ENCODE measurements at regions of chr2 and their contacts with region 1.

Region 1: GRCh38 chr2:113248997-113249770 is 29.5 kb downstream of the PAX8 start:
- DNase-seq: peak; percentile 79 to 80
- ATAC-seq: peak; percentile 57 to 89 (median 80)
- H3K4me3 ChIP-seq: no peak overlapping the region
- H3K27ac ChIP-seq: no peak overlapping the region
- H3K4me1 ChIP-seq: peaks cover 0 to 29% (median 3%) of the 10 kb centered on the region in 9 donors
- H3K27me3 ChIP-seq: peaks cover 0 to 2% (median 0%) of the 10 kb centered on the region in 7 donors
- CTCF ChIP-seq: peak; percentile 87 to 94 (median 91)

Region 2: DNA sequence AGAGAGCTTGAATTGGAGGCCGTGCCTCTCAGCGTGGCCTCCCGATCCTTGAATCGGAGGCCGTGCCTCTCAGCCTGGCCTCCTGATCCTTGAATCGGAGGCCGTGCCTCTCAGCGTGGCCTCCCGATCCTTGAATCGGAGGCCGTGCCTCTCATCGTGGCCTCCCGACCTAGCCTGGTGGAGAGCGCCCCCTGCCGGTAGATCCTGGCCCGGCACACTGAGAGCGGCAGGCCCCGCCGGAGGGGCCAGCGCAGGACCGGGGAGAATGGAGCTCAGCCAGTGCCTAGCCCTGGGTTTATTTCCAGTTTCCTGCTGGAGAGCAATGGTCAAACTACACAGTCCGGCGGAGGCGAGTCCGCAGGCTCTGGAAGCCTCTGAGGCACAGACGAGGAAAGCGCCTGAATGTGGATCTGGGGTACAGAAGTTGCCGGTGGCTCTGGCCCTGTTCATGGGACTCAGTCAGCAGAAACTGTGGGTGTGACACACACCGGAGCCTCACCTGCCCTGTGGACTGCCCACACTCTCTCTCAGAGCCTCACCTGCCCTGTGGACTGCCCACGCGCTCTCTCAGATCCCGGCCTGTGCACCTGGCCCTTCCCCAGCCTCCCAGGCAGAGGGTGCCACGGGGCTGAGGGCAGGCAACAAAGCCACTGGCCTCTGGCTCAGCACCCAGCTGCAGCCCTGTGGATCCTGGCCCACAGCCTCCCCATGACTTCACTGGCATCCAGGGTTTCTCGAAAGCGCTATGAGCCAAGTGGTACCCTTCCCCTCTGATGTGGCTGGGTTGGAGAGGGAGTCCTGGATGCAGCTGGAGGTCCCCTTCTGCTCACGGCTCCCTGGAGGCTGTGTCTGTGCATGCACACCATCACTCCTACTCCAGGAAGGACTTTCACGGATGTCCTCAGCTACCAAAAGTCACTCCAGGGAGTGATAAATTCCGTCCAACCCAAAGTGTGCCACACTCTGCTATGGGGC is 198.0 kb before region 1 on chr2:
- intact Hi-C with region 1: no loop called
- DNase-seq: no peak
- ATAC-seq: peak in 1 of 8 donors; percentile 41
- H3K4me3 ChIP-seq: no peak overlapping the region
- H3K27ac ChIP-seq: no peak overlapping the region
- H3K4me1 ChIP-seq: no peaks in the 10 kb centered on the region
- H3K27me3 ChIP-seq: peaks cover 0 to 11% (median 5%) of the 10 kb centered on the region in 7 donors
- CTCF ChIP-seq: no peak

Region 3: DNA sequence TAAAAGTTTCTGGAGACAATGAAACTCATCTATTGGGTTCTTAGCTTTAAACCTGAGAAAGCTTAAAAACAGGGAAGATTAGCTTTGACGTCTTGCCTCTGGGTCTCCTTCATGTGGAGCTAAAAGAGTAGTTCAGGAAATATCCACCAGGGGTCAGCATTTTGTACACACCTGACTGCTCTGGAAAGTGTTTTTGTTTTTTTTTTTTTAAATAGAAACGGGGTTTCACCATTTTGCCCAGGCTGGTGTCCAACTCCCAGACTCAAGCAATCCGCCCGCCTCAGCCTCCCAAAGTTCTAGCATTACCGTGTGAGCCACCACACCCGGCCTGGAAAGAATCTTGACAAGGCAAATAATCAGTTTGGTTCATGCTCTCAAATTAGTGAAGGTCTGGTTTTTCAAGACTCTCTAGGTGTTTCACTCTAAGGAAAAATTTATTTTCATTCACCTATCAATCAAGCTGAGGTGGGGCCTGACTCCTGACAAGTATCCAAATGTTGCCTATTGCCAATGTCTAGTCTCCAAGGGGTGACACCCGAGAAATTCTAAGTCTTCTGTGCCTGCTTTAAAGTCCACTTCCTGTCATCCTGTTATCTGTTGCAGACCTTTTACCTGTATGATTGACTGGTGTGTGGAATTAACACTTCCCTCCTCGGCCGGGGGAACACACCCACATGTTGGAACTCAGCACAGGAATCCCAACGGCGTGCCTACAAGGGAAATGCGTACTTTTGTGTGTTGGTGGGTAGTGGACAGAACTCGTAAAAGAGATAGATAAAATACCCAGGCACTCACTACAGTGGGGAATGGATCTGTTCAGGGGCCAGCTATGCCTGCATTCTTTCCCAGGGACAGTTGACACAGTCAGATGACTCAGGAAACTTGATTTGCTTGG is 110.5 kb before region 1 on chr2:
- intact Hi-C with region 1: loop called in 2 of 10 experiments (anchors 5 to 10 kb)
- DNase-seq: peak in 1 of 2 donors; percentile 49
- ATAC-seq: peak in 6 of 8 donors; percentile 29 to 74 (median 48)
- H3K4me3 ChIP-seq: no peak overlapping the region
- H3K27ac ChIP-seq: no peak overlapping the region
- H3K4me1 ChIP-seq: peaks cover 0 to 6% (median 0%) of the 10 kb centered on the region in 9 donors
- H3K27me3 ChIP-seq: peaks cover 0 to 5% (median 0%) of the 10 kb centered on the region in 7 donors
- CTCF ChIP-seq: peak; percentile 70 to 85 (median 79)

Region 4: DNA sequence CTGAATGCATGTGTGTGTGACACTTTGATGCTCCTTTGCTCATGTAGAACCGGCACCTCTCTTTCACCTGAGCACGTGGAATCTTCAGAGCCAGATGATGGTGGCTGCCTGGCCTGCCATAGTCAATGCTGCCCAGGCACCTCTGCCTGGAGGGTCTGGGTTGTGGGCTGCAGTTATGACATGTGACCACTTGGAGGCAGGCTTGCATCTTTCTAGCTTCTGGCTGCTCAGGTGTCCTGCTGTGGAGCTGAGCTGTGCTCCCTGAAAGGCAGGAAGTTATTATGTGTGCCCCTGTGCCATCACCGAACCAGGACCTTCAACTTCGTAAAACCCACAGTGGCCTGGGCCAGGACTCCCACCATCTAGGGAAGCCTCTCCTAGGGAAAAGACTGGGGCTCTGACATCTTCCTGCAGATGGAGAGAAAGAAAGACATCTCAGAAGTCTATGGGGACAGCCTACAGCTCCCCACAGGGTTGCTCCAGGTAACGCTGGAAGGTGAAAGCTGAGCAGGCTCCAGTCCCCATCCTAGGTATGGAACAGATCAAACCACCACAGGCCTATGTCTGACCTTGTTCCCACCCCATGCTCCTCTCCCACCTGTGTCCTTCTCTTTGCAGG is 45.2 kb before region 1 on chr2:
- intact Hi-C with region 1: loop called in 9 of 10 experiments (anchors 1 to 5 kb)
- DNase-seq: peak; percentile 60 to 68
- ATAC-seq: peak; percentile 60 to 85 (median 72)
- H3K4me3 ChIP-seq: no peak overlapping the region
- H3K27ac ChIP-seq: no peak overlapping the region
- H3K4me1 ChIP-seq: peaks cover 0 to 14% (median 5%) of the 10 kb centered on the region in 9 donors
- H3K27me3 ChIP-seq: no peaks in the 10 kb centered on the region
- CTCF ChIP-seq: peak; percentile 76 to 91 (median 87)

Region 5: DNA sequence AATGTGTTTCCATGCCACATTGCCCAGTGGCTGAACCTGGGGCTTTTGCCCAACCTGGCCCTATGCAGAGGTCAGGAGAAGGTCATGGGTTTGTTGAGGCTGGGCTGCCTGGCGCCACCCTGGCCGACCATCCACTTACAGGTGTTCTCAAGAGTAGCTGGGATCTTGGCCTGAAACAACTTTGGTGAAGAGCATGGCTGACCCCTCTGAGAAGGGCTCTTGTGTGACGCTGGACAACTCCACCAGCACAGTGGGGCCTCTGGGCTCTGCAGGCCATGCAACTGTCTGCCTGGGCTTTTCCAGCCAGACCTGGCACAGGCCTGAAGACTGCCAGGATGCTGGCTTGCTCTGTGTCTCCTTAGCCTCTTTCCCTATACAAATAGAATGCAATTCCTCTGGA is 111.9 kb after region 1 on chr2:
- intact Hi-C with region 1: loop called in 1 of 10 experiments (anchors 10 kb)
- DNase-seq: no peak
- ATAC-seq: no peak
- H3K4me3 ChIP-seq: no peak overlapping the region
- H3K27ac ChIP-seq: no peak overlapping the region
- H3K4me1 ChIP-seq: no peaks in the 10 kb centered on the region
- H3K27me3 ChIP-seq: no peaks in the 10 kb centered on the region
- CTCF ChIP-seq: no peak

Region 6: DNA sequence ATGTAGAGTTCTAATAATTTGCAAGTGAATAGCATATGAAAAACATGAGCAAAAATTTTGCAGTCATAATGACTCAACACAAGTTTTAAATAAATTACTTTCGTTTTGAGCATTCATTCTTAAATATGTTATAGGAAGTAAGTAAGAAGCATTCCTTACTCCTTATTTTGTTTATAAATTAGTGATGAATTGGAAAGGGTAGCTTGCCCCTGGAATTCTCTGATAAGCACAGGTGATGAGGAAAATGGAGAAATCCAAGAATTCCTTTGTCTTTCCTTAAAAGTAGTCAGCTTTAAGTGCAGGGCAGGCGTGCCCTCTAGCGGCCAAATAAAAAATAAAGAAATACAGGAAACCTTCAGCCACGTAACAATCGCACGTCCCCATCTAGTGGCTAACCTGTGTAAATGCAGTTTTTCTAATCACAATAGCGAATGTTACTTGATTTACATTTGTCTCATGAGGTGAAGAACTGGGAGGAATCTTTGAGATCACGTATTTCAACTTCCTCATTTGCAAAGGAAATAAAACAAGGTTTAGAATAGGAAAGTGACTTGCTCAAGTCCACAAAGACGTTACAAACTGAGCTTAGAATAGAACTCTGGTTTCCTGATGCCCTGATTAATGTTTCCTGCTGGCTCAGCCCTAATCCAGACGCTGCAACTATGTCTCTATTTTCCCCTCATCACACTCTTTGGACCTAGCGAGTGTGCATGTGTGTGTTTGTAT is 141.1 kb after region 1 on chr2:
- intact Hi-C with region 1: loop called in 1 of 10 experiments (anchors 5 kb)
- DNase-seq: peak in 1 of 2 donors; percentile 57
- ATAC-seq: peak in 7 of 8 donors; percentile 71 to 91 (median 79)
- H3K4me3 ChIP-seq: peak overlapping the region in 6 of 10 donors; percentile 8 to 39 (median 17)
- H3K27ac ChIP-seq: peak overlapping the region in 1 of 10 donors; percentile 69
- H3K4me1 ChIP-seq: peaks cover 0 to 17% (median 0%) of the 10 kb centered on the region in 9 donors
- H3K27me3 ChIP-seq: peaks cover 0 to 6% (median 0%) of the 10 kb centered on the region in 7 donors
- CTCF ChIP-seq: peak; percentile 60 to 99 (median 93)

Measured in heart right ventricle (tissue), 16 donors.